Heart right ventricle (tissue), 16 donors: ENCODE measurements at regions of chr16 and their contacts with region 1.

Region 1: GRCh38 chr16:66608241-66609138 is 4.0 kb downstream of the CMTM3 start:
- DNase-seq: peak; percentile 87 to 88
- ATAC-seq: peak; percentile 21 to 71 (median 68)
- H3K4me3 ChIP-seq: no peak overlapping the region
- H3K27ac ChIP-seq: peak overlapping the region in 2 of 10 donors; percentile 24 to 26
- H3K4me1 ChIP-seq: peaks cover 0 to 52% (median 30%) of the 10 kb centered on the region in 9 donors
- H3K27me3 ChIP-seq: no peaks in the 10 kb centered on the region
- CTCF ChIP-seq: peak; percentile 86 to 96 (median 93)

Region 2: DNA sequence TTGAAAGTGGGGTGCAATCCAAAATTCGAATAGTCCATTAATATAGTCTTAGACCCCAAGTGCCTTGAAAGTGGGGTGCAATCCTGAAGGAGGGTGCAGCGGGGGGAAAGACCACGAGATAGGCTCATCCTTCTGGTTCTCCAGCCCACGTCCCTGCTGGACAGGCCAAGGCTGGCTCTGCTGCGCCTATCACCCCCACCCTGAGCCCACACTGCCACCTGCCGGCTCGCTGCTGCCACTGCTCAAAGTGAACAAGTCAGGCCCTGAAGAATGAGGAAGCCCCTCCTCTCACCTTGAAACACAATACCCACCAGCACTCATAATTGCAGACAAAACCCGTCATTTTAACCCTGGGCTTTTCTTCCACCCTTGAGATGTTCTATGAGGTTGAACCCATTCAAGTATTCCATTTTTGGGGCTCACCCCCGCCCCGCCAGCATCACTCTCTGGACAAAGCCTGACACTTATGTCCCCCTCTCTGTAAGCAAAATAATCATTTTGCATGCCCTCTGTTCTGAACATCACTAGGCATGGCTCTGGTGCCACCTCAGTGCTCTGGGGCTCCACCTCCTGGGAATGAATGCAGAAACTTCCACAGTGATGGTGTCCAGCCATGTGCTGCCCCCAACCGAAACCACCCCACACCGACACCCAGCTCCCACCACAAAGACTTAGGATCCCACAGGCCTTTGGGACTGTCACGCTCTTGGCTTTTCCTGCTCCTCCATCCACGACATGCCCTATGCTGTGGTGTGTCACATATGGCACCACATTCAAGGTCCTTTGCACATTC is 124.6 kb before region 1 on chr16:
- intact Hi-C with region 1: loop called in 1 of 10 experiments (anchors 10 kb)
- DNase-seq: peak; percentile 83 to 87
- ATAC-seq: peak; percentile 71 to 84 (median 79)
- H3K4me3 ChIP-seq: no peak overlapping the region
- H3K27ac ChIP-seq: no peak overlapping the region
- H3K4me1 ChIP-seq: peaks cover 0 to 38% (median 17%) of the 10 kb centered on the region in 9 donors
- H3K27me3 ChIP-seq: no peaks in the 10 kb centered on the region
- CTCF ChIP-seq: peak; percentile 90 to 96 (median 95)

Region 3: GRCh38 chr16:66552286-66553177 is 56.0 kb before region 1 on chr16 and contains the start of gene CKLF:
- intact Hi-C with region 1: loop called in 6 of 10 experiments (anchors 1 to 5 kb)
- DNase-seq: peak; percentile 88 to 92
- ATAC-seq: peak; percentile 85 to 95 (median 89)
- H3K4me3 ChIP-seq: peak within 1 kb of the TSS; percentile 33 to 89 (median 60)
- H3K27ac ChIP-seq: peak within 1 kb of the TSS; percentile 89 to 100 (median 96)
- H3K4me1 ChIP-seq: peaks cover 5 to 77% (median 57%) of the 10 kb centered on the region in 9 donors
- H3K27me3 ChIP-seq: no peaks in the 10 kb centered on the region
- CTCF ChIP-seq: no peak
- total RNA-seq, gene CKLF: 1.6 to 19.9 (median 6.7) TPM

Region 4: GRCh38 chr16:66696669-66697630 is 88.5 kb after region 1 on chr16 and contains the start of gene CMTM4:
- intact Hi-C with region 1: loop called in 1 of 10 experiments (anchors 5 kb)
- DNase-seq: peak; percentile 85 to 89
- ATAC-seq: peak; percentile 94 to 99 (median 96)
- H3K4me3 ChIP-seq: peak within 1 kb of the TSS; percentile 56 to 83 (median 72)
- H3K27ac ChIP-seq: peak within 1 kb of the TSS in 9 of 10 donors; percentile 20 to 73 (median 46)
- H3K4me1 ChIP-seq: peaks cover 5 to 44% (median 15%) of the 10 kb centered on the region in 9 donors
- H3K27me3 ChIP-seq: no peaks in the 10 kb centered on the region
- CTCF ChIP-seq: peak in 6 of 9 donors; percentile 19 to 58 (median 38)
- total RNA-seq, gene CMTM4: 7.3 to 14.6 (median 12.1) TPM

Region 5: DNA sequence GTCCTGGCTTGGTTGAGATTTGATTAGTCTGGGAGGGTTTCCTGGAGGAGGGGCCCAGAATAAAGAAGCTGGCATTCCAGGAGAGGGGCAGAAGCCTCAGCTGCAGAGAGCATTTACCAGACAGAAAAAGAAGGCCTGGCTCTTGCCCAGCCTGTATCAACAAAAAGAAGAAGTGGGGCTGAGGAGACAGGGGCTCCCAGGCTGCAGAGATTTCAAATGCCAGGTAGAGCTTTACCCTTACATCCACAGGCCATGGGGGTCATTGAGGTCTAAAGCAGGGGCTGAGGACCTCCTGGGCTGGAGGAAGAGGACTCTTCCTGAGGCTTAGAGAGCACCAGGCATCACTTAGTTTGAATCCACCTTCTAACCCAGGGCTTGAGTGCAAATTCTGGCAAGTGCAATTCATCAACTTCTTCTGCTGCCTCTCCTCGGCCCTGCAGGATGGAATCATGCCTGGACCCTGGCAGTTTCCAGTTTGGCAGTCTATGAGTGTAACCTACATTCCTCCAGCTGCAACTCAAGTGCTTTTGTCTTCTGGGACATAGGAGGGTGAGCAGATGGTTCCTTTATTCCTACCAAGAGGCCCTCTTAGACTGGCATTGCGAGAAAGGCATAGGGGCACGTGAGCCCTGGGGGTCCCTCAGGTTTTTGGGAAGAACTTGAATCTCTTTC is 251.0 kb after region 1 on chr16:
- intact Hi-C with region 1: loop called in 2 of 10 experiments (anchors 10 kb)
- DNase-seq: no peak
- ATAC-seq: peak in 1 of 8 donors; percentile 4
- H3K4me3 ChIP-seq: no peak overlapping the region
- H3K27ac ChIP-seq: no peak overlapping the region
- H3K4me1 ChIP-seq: peaks cover 0 to 6% (median 0%) of the 10 kb centered on the region in 9 donors
- H3K27me3 ChIP-seq: no peaks in the 10 kb centered on the region
- CTCF ChIP-seq: no peak